Activated CD8-positive, alpha-beta memory T cell treated with anti-CD3 and anti-CD28 coated beads, Interleukin-2, amount 10 ng/mL, durations not matched to agents 7 days and 5 days (primary cell): ENCODE measurements at regions of chr1 and their contacts with region 1.

Region 1: GRCh38 chr1:67149179-67149770 is 14.5 kb upstream of the C1orf141 start:
- DNase-seq: peak; percentile 72
- ATAC-seq: peak; percentile 88
- H3K4me3 Mint-ChIP-seq: no peak overlapping the region
- H3K27ac Mint-ChIP-seq: no peak overlapping the region
- H3K4me1 Mint-ChIP-seq: peaks cover 24% of the 10 kb centered on the region
- H3K27me3 Mint-ChIP-seq: peaks cover 38% of the 10 kb centered on the region

Region 2: DNA sequence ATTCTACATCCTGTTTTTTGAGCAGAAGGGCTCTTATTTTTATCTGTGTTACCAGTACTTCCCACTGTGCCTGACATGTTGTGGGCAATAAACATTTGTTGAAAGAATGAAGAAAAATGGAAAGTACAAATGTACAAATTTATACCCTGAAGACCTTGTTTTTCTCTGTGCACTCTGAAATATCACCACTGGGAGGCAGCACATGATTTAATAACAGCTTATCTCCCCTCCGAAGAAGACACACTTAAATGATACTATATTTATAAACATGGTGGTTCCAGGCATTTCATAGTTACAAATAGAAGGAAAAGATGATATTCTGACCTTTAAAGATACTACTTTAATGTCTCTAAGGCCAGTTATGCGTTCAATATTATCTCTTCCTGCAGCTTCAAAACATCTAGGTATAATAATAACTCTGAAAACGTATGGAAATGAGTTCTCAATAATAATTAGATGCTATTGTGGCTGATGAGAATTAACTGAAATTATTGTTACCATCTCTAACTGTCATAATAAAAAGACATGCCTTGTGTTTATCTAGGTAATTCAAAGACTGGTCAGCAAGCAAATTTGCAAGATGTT is 384.2 kb before region 1 on chr1:
- CTCF ChIA-PET with region 1: interaction called, 15 read pairs
- DNase-seq: peak; percentile 67
- ATAC-seq: no peak
- H3K4me3 Mint-ChIP-seq: no peak overlapping the region
- H3K27ac Mint-ChIP-seq: no peak overlapping the region
- H3K4me1 Mint-ChIP-seq: peaks cover 16% of the 10 kb centered on the region
- H3K27me3 Mint-ChIP-seq: no peaks in the 10 kb centered on the region

Region 3: DNA sequence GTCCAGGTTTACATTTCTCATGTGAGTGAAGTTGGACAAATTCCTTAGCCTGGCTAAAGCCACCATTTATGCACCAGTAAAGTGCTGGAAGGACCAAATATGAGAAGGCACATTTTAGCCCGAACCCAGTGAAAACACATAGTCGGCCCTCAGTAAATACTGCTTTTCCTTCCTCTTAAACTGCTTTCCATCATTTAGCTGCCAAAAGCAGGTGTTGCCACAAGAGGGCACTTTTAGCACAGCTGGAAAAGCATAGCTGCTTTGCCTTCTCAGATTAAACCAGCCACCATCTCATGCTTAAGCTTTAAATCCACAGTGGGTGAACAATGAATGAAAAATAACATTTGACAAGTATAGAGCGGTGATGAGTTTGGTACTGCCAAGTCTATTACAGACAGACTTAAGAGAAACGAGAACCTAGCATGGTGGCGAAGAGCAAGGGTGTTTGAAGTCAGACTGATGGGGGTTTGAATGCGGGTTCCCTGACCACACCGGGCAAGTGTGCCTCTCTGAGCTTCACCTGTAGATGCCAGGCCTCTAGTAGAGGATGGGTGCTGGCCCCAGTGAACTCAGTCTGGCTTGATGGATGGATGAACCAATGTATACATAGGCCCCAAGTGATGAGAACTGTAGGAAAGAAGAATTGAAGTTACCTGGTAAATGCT is 153.1 kb before region 1 on chr1:
- CTCF ChIA-PET with region 1: interaction called, 46 read pairs
- DNase-seq: peak; percentile 76
- ATAC-seq: peak; percentile 71
- H3K4me3 Mint-ChIP-seq: no peak overlapping the region
- H3K27ac Mint-ChIP-seq: no peak overlapping the region
- H3K4me1 Mint-ChIP-seq: peaks cover 14% of the 10 kb centered on the region
- H3K27me3 Mint-ChIP-seq: no peaks in the 10 kb centered on the region

Region 4: GRCh38 chr1:67162957-67163356 is 13.7 kb after region 1 on chr1:
- CTCF ChIA-PET with region 1: interaction called, 22 read pairs
- DNase-seq: peak; percentile 82
- ATAC-seq: peak; percentile 94
- H3K4me3 Mint-ChIP-seq: no peak overlapping the region
- H3K27ac Mint-ChIP-seq: peak overlapping the region; percentile 71
- H3K4me1 Mint-ChIP-seq: peaks cover 40% of the 10 kb centered on the region
- H3K27me3 Mint-ChIP-seq: peaks cover 12% of the 10 kb centered on the region

Region 5: DNA sequence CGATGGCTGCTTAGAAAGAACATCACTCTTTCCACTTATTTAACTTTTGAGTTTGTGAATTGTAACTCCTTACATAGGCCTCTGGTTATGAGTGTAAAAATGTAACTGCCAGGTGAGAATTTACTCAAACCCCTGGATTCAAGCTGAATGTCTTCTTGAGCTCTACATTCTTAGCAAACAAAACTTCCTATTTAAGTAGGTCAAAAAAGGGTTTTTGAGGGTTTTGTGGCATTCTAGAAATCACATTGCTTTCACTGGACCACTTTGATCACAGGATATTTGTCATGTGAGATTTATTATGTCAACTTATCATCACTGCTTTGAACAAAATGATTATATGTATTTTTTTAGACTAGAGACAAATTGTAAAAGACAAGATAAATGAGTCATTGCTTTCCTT is 22.7 kb after region 1 on chr1:
- CTCF ChIA-PET with region 1: interaction called, 15 read pairs
- DNase-seq: no peak
- ATAC-seq: peak; percentile 54
- H3K4me3 Mint-ChIP-seq: peak overlapping the region; percentile 4
- H3K27ac Mint-ChIP-seq: peak overlapping the region; percentile 80
- H3K4me1 Mint-ChIP-seq: peaks cover 43% of the 10 kb centered on the region
- H3K27me3 Mint-ChIP-seq: peaks cover 22% of the 10 kb centered on the region